Gastrocnemius medialis (tissue), 4 donors: ENCODE measurements at regions of chr10 and their contacts with region 1.

Region 1: DNA sequence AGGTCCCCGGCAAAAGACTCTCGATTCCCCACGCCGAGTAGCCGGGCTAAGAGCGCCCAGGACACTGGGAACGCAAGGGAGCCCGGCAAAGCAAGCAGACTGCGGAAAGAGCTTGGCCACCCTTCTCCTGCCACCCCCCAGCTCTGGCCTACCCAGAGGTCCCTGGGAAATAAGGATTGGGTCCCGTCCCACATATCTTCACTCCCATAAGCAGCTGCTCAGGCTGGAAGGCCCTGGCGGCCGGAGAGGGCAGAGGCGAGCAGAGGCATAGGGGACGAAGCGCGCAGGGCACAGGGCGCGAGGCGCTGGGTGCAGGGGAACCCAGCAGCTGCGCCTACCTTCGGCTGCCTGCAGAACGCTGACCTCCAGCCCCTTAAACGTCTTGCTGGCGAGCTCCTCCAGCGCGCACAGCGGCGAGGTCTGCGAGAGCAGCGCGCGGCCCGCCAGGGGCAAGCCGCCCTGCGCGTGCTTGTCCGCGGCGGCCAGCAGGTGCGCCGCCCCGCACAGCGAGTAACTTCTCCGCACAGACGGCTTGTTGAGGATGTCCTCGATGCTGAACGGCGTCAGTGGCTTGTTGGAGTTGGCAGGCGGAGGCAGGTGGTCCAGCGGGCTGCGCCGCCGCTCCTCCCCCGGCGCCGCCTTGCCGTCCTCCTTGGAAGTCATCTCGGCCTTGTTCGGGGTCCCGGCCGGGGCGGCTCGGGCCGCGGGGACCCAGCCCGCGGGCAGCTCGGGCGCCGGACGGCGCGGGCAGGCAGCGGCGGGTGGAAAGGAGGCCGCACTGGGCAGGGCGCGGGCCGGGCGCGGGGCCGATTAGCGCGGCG is 900 bp downstream of the LBX1 start:
- DNase-seq: peak in 1 of 2 donors; percentile 73
- ATAC-seq: peak; percentile 40 to 41
- H3K4me3 ChIP-seq: peak overlapping the region; percentile 54 to 87 (median 68)
- H3K27ac ChIP-seq: peak overlapping the region; percentile 92 to 96 (median 96)
- H3K4me1 ChIP-seq: peaks cover 24 to 57% of the 10 kb centered on the region in 2 donors
- H3K27me3 ChIP-seq: peaks cover 20 to 27% (median 23%) of the 10 kb centered on the region in 3 donors
- CTCF ChIP-seq: peak in 4 of 5 experiments; percentile 21 to 50 (median 46)
- POLR2A ChIP-seq: peak; percentile 18 to 48

Region 2: GRCh38 chr10:101244321-101245050 is 16.1 kb after region 1 on chr10:
- in situ Hi-C with region 1: no loop called
- intact Hi-C with region 1: loop called (anchors 1 kb)
- DNase-seq: peak in 1 of 2 donors; percentile 53
- ATAC-seq: peak; percentile 67 to 83
- H3K4me3 ChIP-seq: no peak overlapping the region
- H3K27ac ChIP-seq: peak overlapping the region; percentile 75 to 90 (median 78)
- H3K4me1 ChIP-seq: peaks cover 27 to 34% of the 10 kb centered on the region in 2 donors
- H3K27me3 ChIP-seq: peaks cover 0 to 1% (median 0%) of the 10 kb centered on the region in 3 donors
- CTCF ChIP-seq: no peak
- POLR2A ChIP-seq: no peak

Region 3: DNA sequence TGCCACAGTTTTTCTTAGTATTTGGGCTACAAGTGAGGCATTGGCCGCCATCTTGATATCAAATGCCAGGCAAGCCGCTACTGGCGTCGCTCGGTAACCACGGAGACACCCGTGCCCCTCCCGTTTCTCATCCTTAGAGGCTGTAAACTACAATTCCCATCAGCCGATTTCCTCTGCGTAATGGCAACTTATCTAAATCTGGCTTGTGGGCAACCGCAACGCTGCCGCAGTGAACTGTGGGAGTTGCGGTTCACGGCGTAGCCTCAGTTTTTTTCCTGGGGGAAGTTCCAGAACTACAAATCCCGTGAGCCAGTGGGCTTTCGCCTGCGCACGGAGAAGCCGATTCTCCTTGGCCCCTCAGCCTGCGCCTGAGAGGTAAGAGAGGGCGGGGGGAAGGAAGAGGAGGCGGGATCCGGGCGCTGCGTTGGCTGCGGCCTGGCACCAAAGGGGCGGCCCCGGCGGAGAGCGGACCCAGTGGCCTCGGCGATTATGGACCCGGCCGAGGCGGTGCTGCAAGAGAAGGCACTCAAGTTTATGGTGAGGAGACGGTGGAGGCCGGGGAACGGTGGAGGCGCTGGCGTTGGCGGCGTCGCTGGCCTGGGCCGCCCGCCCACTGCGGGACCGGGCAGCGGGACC is 125.4 kb after region 1 on chr10 and contains the start of gene BTRC:
- in situ Hi-C with region 1: no loop called
- intact Hi-C with region 1: loop called (anchors 5 kb)
- DNase-seq: peak; percentile 97 to 98
- ATAC-seq: peak; percentile 97 to 98
- H3K4me3 ChIP-seq: peak within 1 kb of the TSS; percentile 87 to 98 (median 94)
- H3K27ac ChIP-seq: peak within 1 kb of the TSS; percentile 82 to 96 (median 90)
- H3K4me1 ChIP-seq: peaks cover 18 to 29% of the 10 kb centered on the region in 2 donors
- H3K27me3 ChIP-seq: no peaks in the 10 kb centered on the region
- CTCF ChIP-seq: no peak
- POLR2A ChIP-seq: peak; percentile 69 to 78
- total RNA-seq, gene BTRC: 8.7 to 17.3 (median 12.6) TPM